HCT116 (cell line): ENCODE measurements at regions of chr2 and their contacts with region 1.

Region 1: DNA sequence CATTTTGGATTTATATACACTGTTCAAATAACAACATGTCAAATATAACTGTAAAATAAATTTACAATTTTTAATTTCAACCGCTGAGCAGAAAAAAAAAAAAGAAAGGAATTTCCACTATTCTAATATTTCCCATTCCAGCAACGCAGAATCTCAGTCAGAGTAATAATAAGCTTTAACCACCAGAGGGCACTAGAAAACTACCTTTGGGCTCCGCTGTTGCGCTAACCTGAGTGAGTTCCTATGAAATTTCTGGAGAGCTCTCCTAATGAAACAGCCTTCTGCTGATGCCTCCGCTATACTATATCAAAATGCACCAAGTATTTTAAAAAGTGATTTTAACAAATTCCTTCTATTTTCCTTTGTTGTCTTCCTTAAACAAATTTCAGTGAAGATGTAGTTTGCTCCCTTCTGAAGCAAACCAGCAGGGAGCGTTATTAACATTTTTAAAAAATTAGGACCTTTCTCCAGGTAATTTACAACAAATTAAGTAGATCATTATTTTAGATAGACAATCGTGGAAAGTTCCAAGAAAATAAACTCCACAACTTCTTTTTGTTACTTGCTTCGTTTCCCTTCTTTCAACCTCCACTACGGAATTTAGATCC is 23.0 kb downstream of the ERMN start:
- DNase-seq: peak; percentile 13
- ATAC-seq: peak; percentile 88
- H3K4me3 ChIP-seq: no peak overlapping the region
- H3K27ac ChIP-seq: no peak overlapping the region
- H3K4me1 ChIP-seq: 0 out of 4 replicates have a peak, but pooled peaks cover 0 to 5% of the 10 kb centered on the region in 2 experiments
- H3K27me3 ChIP-seq: no peaks in the 10 kb centered on the region
- CTCF ChIP-seq: peak; percentile 56 to 80 (median 78)
- POLR2A ChIP-seq: no peak
- RAD21 ChIP-seq: peak; percentile 83

Region 2: DNA sequence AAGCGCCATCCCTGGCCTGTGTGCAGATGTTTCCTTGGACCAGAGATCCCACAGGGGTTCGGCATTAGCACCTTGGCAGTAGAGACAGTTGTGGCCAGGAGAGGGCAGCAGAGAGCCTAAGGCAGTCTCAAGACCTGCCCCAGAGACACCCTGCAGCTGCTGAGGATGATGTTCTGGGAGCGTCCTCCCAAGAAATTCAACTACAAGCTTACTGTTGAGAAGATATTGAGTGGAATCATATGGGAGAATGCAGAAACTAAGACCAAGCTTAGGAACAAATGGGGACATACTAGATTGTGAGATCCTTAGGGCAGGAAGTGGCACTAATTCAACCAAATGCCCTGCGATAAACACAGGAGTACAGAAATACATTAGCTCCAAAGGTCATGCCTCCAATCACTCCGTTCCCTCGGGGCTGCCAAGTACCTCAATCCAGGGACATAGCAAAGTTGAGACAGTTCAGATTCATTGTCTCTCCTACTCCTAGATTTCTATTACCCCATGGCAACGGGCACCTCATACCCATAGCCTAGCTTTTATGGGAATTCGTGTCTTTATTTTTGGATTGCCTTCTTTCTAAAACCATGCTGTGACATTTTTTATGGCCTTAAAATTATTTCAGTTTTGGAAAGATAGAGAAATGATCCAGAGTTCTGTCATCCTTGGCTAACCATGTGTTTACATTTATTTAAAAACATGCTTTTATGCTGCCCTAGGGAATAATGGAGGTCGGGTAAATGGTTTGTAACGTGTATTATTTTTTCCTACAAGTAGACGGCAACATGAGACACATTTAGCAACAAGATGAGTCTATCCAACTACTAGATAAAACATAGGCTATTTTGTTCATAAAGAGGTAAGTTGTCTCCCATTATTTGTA is 25.3 kb after region 1 on chr2:
- CTCF ChIA-PET with region 1: interaction called, 29 read pairs
- POLR2A ChIA-PET with region 1: no interaction called
- RAD21 ChIA-PET with region 1: interaction called, 3 read pairs
- intact Hi-C with region 1: no loop called
- DNase-seq: peak; percentile 65
- ATAC-seq: peak; percentile 100
- H3K4me3 ChIP-seq: no peak overlapping the region
- H3K27ac ChIP-seq: no peak overlapping the region
- H3K4me1 ChIP-seq: no peaks in the 10 kb centered on the region
- H3K27me3 ChIP-seq: no peaks in the 10 kb centered on the region
- CTCF ChIP-seq: peak; percentile 50 to 97 (median 92); a peak in 5 of 6 replicates
- POLR2A ChIP-seq: no peak
- RAD21 ChIP-seq: peak; percentile 71

Region 3: DNA sequence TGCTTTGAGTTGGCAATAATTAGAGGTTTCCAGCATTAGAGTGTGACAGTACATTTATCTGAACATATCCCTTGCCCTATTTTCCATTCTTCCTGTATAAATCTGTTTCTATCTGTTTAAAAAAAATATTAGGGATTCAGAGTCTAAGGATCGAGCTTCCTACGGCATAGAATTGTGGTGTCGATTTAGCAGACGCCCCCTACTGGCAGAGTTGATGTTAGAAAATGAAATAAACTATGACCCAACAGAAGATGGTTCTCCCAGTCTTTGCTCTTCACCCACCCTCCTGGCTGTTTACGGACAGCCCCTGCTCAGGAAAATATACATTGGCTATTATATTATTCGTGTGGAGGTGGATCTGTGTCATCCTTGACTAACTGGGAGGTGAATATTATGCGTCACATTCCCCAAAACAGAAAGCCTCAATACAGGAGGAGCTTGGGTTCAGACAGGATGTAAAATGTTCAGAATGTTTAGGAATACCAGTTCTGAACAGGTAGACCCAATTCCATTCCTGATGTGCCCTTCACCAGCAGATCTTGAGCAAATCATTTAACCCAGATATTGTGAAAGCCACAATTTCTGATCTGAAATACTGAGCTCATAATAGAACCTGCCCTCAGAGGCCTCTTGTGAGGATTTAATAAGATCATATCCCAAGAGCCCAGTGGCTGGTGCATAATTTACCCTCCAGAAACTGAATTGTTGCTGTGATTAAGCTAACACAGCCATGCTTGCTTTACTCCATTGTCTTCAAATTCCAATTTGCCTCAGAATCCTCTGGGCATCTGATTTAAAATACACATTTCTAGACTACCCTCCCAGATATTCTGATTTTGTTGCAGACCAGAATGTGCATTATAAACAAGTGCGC is 33.8 kb after region 1 on chr2:
- CTCF ChIA-PET with region 1: interaction called, 18 read pairs
- POLR2A ChIA-PET with region 1: no interaction called
- RAD21 ChIA-PET with region 1: no interaction called
- intact Hi-C with region 1: no loop called
- DNase-seq: peak; percentile 39
- ATAC-seq: peak; percentile 98
- H3K4me3 ChIP-seq: no peak overlapping the region
- H3K27ac ChIP-seq: no peak overlapping the region
- H3K4me1 ChIP-seq: peaks cover 0 to 4% of the 10 kb centered on the region in 2 experiments; a peak in 1 of 4 replicates
- H3K27me3 ChIP-seq: no peaks in the 10 kb centered on the region
- CTCF ChIP-seq: peak; percentile 31 to 85 (median 69); a peak in 5 of 6 replicates
- POLR2A ChIP-seq: no peak
- RAD21 ChIP-seq: peak; percentile 39; the same call in 1 of the 2 replicates

Region 4: GRCh38 chr2:157492189-157492773 is 189.7 kb after region 1 on chr2:
- CTCF ChIA-PET with region 1: interaction called, 3 read pairs
- POLR2A ChIA-PET with region 1: no interaction called
- RAD21 ChIA-PET with region 1: no interaction called
- intact Hi-C with region 1: loop called (anchors 5 kb)
- DNase-seq: peak; percentile 49
- ATAC-seq: peak; percentile 93
- H3K4me3 ChIP-seq: no peak overlapping the region
- H3K27ac ChIP-seq: no peak overlapping the region
- H3K4me1 ChIP-seq: peaks cover 0 to 5% of the 10 kb centered on the region in 2 experiments; a peak in 1 of 4 replicates
- H3K27me3 ChIP-seq: no peaks in the 10 kb centered on the region
- CTCF ChIP-seq: peak; percentile 69 to 89 (median 69); a peak in 5 of 6 replicates
- POLR2A ChIP-seq: no peak
- RAD21 ChIP-seq: peak; percentile 85